CD4-positive, alpha-beta memory T cell (primary cell): ENCODE measurements at regions of chr2 and their contacts with region 1.

Region 1: DNA sequence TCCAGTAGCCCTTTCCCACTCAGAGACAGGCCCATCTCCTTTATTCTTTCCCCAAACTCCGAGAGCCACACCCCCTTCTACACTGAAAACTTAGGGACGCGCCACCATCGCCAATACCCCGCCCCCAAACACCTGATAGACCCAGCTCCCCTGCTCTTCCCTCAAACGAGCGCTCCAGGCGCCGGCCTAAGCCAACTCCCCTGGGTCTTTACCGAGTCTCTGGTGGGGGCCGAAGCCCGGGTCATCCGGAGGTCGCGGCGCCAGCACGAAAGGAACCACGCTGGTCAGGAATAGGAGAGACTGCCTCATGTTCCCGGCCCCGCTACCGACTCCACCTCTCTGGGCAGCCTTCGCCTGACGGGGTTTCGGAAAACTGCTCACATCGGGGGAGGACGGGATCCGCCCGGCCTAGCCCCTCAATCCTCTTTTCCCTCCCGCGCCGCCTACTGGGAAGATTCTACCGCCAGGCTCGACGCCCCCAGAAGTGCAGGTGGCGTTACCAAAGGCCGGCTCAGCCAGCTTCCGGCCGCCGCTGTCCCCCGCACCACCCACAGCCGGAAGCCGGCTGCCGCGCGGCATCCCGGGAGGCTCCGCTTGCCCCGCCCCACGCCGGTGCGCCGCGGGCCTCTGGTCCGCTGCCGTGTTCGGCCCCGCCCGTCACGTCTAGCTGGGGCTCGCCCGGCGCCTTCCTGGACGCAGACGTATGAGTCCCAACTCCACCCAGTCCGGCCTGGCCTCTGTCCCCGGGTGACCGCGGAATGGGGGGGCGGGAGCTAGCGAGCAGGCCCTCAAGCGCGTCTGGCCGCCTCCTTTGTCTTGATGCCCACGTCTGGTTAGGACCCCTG is at the start of gene ADAM17:
- DNase-seq: peak; percentile 81 to 85 (median 82)
- H3K4me3 ChIP-seq: peak within 1 kb of the TSS; percentile 97 to 99
- H3K4me3 Mint-ChIP-seq: peak within 1 kb of the TSS; percentile 92 to 99 (median 98)
- H3K27ac ChIP-seq: peak within 1 kb of the TSS; percentile 90
- H3K27ac Mint-ChIP-seq: peak within 1 kb of the TSS; percentile 93 to 98 (median 98)
- H3K4me1 ChIP-seq: peaks cover 54% of the 10 kb centered on the region
- H3K4me1 Mint-ChIP-seq: peaks cover 32 to 56% (median 45%) of the 10 kb centered on the region in 4 donors
- H3K27me3 ChIP-seq: no peaks in the 10 kb centered on the region
- H3K27me3 Mint-ChIP-seq: no peaks in the 10 kb centered on the region
- total RNA-seq, gene ADAM17: 32.7 to 35.6 TPM

Region 2: DNA sequence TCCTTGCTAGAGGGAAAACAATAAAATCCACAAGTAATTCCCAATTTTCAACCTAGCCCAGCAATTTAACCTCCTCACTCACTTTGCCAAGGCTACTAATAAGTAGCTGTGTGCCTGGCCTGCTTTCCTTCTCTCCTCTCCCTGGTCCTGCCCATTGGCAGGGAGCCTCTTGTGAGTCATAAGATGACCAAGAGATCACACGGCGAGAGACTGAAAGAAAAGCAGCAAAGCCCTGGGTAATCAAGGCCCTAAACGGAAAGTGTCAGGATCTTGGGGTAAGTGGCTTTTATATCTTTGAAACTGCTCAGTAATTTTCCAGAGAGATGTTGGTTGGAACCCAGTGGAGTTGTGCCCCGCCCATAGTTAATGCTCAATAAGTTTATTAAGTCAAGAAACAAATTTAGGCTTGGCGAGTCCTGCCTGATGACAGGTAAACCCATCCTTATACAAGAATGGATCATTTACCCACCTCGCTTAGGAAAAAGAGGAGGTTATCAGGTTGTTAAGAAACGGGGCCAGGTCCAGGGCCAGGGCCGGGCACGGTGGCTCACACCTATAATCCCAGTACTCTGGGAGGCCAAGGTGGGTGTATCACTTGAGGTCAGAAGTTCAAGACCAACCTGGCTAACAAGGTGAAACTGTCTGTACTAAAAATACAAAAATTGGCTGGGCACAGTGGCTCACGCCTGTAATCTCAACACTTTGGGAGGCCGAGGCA is 10.1 kb after region 1 on chr2:
- CTCF ChIA-PET with region 1: interaction called, 3 read pairs
- POLR2A ChIA-PET with region 1: interaction called, 12 read pairs
- intact Hi-C with region 1: no loop called
- DNase-seq: no peak
- H3K4me3 ChIP-seq: no peak overlapping the region
- H3K4me3 Mint-ChIP-seq: no peak overlapping the region
- H3K27ac ChIP-seq: no peak overlapping the region
- H3K27ac Mint-ChIP-seq: no peak overlapping the region
- H3K4me1 ChIP-seq: no peaks in the 10 kb centered on the region
- H3K4me1 Mint-ChIP-seq: no peaks in the 10 kb centered on the region
- H3K27me3 ChIP-seq: no peaks in the 10 kb centered on the region
- H3K27me3 Mint-ChIP-seq: no peaks in the 10 kb centered on the region

Region 3: DNA sequence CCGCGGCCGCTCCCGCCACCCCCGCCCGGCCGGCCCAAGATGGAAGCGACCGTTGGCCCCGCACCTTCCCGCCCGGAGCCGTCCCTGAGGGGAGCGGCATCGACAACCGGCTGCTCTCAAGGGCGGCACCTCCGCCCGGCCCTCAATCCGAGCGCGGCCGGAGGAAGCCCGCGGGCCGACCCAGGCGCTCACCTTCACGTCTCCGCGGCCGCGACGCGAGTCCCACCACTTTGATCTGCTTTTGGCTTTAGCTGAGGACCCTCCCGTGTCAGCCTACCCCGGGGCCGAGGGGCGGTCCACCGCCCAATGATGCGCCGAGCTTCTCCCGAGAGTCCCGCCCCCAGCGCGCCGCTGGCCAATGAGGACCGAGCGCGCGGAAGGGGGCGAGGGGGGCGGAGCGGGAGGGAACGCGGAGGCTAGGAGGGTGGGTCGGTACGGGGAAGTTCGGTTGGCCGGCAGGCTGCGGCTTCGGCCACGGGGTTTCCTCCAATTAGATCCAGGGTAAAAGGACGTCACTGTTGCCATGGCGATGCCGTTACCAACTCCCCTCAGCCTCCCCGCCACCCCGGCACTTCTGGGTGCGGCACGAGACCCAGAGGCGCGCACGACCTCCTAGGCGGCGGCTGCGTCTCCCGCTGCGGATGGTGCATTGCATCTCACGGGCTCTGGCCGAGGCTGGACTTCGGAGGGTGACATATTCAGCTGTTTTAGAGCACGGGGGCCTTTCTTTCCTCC is 75.4 kb after region 1 on chr2 and contains the start of gene YWHAQ:
- CTCF ChIA-PET with region 1: interaction called, 7 read pairs
- POLR2A ChIA-PET with region 1: interaction called, 69 read pairs
- intact Hi-C with region 1: loop called (anchors 1 kb)
- DNase-seq: peak; percentile 97 to 98 (median 97)
- H3K4me3 ChIP-seq: peak within 1 kb of the TSS; percentile 45 to 86
- H3K4me3 Mint-ChIP-seq: peak within 1 kb of the TSS; percentile 94 to 98 (median 96)
- H3K27ac ChIP-seq: peak within 1 kb of the TSS; percentile 86
- H3K27ac Mint-ChIP-seq: peak within 1 kb of the TSS; percentile 96 to 98 (median 98)
- H3K4me1 ChIP-seq: peaks cover 46% of the 10 kb centered on the region
- H3K4me1 Mint-ChIP-seq: peaks cover 37 to 58% (median 46%) of the 10 kb centered on the region in 4 donors
- H3K27me3 ChIP-seq: no peaks in the 10 kb centered on the region
- H3K27me3 Mint-ChIP-seq: no peaks in the 10 kb centered on the region
- total RNA-seq, gene YWHAQ: 124 TPM

Region 4: GRCh38 chr2:9753276-9753600 is 197.7 kb after region 1 on chr2:
- CTCF ChIA-PET with region 1: interaction called, 4 read pairs
- POLR2A ChIA-PET with region 1: interaction called, 25 read pairs
- intact Hi-C with region 1: no loop called
- DNase-seq: peak in 4 of 5 donors; percentile 35 to 79 (median 48)
- H3K4me3 ChIP-seq: peak overlapping the region in 1 of 2 donors; percentile 52
- H3K4me3 Mint-ChIP-seq: peak overlapping the region; percentile 80 to 96 (median 94)
- H3K27ac ChIP-seq: peak overlapping the region; percentile 53
- H3K27ac Mint-ChIP-seq: peak overlapping the region; percentile 90 to 100 (median 99)
- H3K4me1 ChIP-seq: peaks cover 49% of the 10 kb centered on the region
- H3K4me1 Mint-ChIP-seq: peaks cover 29 to 72% (median 50%) of the 10 kb centered on the region in 4 donors
- H3K27me3 ChIP-seq: no peaks in the 10 kb centered on the region
- H3K27me3 Mint-ChIP-seq: no peaks in the 10 kb centered on the region

Region 5: GRCh38 chr2:9799665-9800632 is 244.4 kb after region 1 on chr2:
- CTCF ChIA-PET with region 1: interaction called, 11 read pairs
- POLR2A ChIA-PET with region 1: interaction called, 8 read pairs
- intact Hi-C with region 1: no loop called
- DNase-seq: peak; percentile 76 to 84 (median 79)
- H3K4me3 ChIP-seq: peak overlapping the region in 1 of 2 donors; percentile 21
- H3K4me3 Mint-ChIP-seq: peak overlapping the region; percentile 71 to 96 (median 89)
- H3K27ac ChIP-seq: peak overlapping the region; percentile 75
- H3K27ac Mint-ChIP-seq: peak overlapping the region; percentile 92 to 98 (median 93)
- H3K4me1 ChIP-seq: peaks cover 36% of the 10 kb centered on the region
- H3K4me1 Mint-ChIP-seq: peaks cover 21 to 48% (median 33%) of the 10 kb centered on the region in 4 donors
- H3K27me3 ChIP-seq: no peaks in the 10 kb centered on the region
- H3K27me3 Mint-ChIP-seq: no peaks in the 10 kb centered on the region

Region 6: DNA sequence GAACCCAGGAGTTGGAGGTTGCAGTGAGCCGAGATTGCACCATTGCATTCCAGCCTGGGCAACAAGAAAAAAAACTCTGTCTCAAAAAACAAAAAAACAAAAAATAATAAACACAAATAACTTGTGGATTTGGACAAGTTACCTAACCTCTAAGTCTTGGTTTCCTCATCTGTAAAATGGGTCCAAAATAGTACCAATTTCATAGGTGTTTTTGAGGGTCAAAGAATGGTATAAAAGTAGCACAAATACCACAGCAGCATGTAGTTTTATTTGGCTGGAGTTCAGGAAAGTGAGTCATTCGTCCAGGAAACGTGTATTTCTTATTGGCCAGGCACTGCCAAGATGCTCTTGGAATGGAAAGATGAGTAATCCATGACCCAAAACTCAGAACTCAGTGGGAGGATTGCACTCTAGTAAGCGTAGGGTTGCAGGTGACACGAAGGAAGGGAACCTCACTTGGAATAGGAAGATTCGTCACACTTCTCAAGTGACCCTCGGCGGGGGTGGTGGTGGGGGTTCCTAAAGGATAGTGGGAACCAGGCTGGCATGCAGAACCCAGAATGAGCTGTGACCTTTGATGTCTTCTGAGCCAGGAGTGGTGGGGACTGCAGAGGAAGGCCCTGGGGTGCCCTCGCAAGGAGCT is 420.4 kb after region 1 on chr2:
- CTCF ChIA-PET with region 1: no interaction called
- POLR2A ChIA-PET with region 1: no interaction called
- intact Hi-C with region 1: no loop called
- DNase-seq: no peak
- H3K4me3 ChIP-seq: no peak overlapping the region
- H3K4me3 Mint-ChIP-seq: no peak overlapping the region
- H3K27ac ChIP-seq: no peak overlapping the region
- H3K27ac Mint-ChIP-seq: no peak overlapping the region
- H3K4me1 ChIP-seq: peaks cover 7% of the 10 kb centered on the region
- H3K4me1 Mint-ChIP-seq: peaks cover 5 to 8% (median 6%) of the 10 kb centered on the region in 4 donors
- H3K27me3 ChIP-seq: no peaks in the 10 kb centered on the region
- H3K27me3 Mint-ChIP-seq: peaks cover 8 to 10% of the 10 kb centered on the region in 2 donors

Region 7: DNA sequence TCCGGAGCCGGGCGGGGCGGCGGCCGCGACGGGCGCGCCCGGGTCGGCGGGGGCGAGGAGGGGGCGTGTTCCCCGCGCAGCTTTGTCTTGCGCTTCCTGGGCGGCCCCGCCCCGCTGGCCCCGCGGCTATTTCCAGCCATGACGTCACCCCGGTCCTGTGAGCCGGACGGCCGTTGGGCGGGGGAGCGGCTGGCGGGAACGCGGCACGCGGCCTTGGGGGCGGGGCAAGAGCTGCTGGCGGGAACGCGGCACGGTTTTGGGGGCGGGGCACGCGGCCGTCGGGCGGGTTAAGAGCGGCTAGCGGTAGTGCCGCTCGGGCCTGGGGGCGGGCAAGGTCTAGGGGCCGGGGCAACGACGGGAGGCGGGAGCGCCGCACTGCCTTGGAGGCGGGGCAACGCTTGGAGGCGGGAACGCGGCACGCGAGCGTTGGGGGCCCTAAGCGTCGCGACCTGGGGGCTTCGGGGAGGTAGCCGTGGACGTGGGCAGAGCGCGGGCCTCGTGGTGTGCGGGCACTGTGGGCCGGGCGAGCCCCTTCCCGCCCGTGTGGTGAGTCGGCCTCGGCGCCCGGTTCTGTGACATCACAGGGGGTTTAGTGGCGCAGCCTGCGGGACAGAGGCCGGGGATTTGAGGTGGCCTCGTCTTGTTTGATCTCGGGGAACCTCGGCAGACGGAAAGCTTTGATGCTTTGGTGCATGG is 488.5 kb after region 1 on chr2:
- CTCF ChIA-PET with region 1: no interaction called
- POLR2A ChIA-PET with region 1: no interaction called
- intact Hi-C with region 1: loop called (anchors 5 kb)
- DNase-seq: peak; percentile 92 to 97 (median 95)
- H3K4me3 ChIP-seq: peak overlapping the region in 1 of 2 donors; percentile 43
- H3K4me3 Mint-ChIP-seq: peak overlapping the region; percentile 69 to 86 (median 84)
- H3K27ac ChIP-seq: peak overlapping the region; percentile 66
- H3K27ac Mint-ChIP-seq: peak overlapping the region; percentile 90 to 99 (median 98)
- H3K4me1 ChIP-seq: peaks cover 21% of the 10 kb centered on the region
- H3K4me1 Mint-ChIP-seq: peaks cover 18 to 45% (median 27%) of the 10 kb centered on the region in 4 donors
- H3K27me3 ChIP-seq: no peaks in the 10 kb centered on the region
- H3K27me3 Mint-ChIP-seq: no peaks in the 10 kb centered on the region